Activated T-helper 2 cell treated with anti-CD3 and anti-CD28 coated beads, Interferon-gamma antibody, Interleukin-2, Interleukin-4, amounts not matched to agents 10 μg/mL and 5 μg/mL and 100 μg/mL, durations not matched to agents 14 hours and 24 hours and 36 hours (primary cell): ENCODE measurements at regions of chrX and their contacts with region 1.

Region 1: DNA sequence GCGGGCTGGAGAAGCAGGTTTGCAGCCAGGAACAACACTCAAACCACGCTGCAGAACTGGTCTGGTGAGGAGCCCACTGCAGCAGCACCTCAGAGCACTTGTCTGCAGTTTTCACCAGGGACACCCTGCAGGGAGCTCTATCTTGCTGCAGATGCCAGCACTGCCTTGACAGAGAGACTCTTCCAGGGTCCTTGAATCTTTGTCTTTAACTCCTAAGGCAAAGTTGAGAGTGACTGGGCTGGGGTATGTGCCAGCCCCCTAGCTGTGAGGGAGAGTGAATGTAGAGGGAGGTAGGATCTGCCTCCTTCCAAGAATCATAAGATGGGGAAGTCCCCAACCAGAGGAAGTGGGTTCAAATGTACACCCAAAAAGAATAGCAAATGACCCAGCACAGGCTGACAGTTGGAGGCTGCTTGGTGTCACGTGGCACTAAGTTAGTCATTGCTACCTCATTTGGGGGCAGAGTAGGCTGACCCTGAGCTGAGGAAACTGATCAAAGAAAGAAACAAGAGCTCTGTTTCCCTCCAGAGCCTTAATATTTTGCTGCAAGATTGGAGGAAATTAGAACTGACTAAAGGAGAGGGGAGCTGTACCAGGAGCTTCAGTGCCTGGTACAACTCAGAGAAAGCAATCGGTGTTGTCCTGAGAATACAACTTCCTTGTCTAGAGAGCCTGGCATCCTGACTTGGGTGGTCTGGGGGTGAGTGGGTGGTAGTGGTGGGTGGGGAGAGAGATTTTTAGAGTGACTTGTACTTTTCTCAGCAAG is 28.2 kb upstream of the HUWE1 start:
- DNase-seq: peak; percentile 69
- H3K4me3 Mint-ChIP-seq: peak overlapping the region; percentile 86
- H3K27ac Mint-ChIP-seq: peak overlapping the region; percentile 99
- H3K4me1 Mint-ChIP-seq: peaks cover 46% of the 10 kb centered on the region
- H3K27me3 Mint-ChIP-seq: no peaks in the 10 kb centered on the region

Region 2: DNA sequence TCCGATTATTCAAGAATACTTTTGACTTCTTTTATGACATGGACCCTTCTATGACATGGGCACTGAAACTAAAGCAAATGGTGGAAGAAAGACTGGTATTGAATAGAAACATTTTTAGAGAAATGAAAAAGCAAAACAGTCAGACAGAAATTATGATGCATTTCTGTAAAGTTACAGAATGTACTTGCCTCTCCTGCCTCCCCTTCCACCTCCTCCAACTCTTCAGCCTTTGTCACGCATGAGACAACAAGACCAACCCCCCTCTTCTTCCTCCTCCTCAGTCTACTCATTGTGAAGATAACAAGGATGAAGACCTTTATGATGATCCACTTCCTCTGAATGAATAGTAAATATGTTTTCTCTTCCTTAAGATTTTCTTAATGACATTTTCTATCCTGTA is 18.0 kb after region 1 on chrX:
- intact Hi-C with region 1: loop called (anchors 1 kb)
- DNase-seq: no peak
- H3K4me3 Mint-ChIP-seq: peak overlapping the region; percentile 73
- H3K27ac Mint-ChIP-seq: peak overlapping the region; percentile 90
- H3K4me1 Mint-ChIP-seq: peaks cover 40% of the 10 kb centered on the region
- H3K27me3 Mint-ChIP-seq: no peaks in the 10 kb centered on the region

Region 3: DNA sequence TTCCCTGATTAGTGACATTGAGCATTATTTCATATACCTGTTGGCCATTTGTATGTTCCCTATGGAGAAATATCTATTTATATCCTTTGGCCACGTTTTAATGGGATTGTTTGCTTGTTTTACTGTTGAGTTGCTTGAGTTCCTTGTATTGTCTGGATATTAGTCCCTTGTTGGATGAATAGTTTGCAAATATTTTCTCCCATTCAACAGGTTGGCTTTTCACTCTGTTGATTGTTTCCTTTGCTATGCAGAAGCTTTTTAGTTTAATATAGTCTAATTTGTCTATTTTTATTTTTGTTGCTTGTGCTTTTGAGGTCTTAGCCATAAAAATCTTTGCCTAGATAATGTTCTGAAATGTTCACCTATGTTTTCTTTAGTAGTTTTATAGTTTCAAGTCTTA is 32.0 kb after region 1 on chrX:
- intact Hi-C with region 1: loop called (anchors 5 kb)
- DNase-seq: no peak
- H3K4me3 Mint-ChIP-seq: no peak overlapping the region
- H3K27ac Mint-ChIP-seq: no peak overlapping the region
- H3K4me1 Mint-ChIP-seq: peaks cover 6% of the 10 kb centered on the region
- H3K27me3 Mint-ChIP-seq: no peaks in the 10 kb centered on the region

Region 4: DNA sequence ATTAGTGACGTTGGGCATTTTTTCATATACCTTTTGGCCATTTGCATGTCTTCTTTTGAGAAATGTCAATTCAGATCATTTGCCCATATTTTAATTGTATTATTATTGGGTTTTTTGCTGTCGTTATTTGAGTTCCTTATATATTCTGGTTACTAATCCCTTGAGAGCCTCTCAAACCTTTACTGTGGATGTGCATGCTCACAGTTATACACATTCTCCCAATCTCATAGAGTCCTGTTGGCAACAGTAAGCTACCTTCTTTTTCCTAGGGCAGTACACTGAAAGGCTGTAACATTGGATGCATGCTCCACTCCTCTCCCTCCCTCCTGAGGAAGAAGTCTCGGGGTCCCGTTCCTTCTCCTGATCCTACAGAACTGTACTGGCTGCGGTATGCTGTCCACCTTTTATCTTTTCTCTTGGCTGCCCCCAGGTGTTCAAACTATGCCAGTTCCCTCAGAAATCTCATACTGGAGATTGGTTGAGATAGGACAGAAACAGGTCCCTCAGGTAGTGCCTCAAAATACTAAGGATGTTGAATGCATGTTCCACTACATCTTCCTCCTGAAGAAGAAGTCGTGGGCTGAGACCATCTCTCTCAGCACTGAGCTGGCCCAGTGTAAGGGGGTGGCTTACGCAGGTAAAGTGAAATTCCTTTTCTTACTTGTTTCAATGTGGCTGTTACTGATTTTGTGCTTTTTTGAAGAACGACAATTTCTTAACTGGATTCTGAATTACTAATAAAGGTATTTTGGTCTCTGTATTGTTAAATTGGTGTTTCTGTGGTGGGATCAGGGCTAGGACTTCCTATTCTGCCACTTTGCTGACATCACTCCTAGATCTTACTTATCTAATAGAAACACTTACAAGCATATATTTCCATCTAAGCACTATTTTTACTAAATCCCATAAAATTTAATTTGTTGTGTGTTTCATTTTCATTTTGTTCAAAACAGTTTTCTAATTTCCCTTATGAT is 117.2 kb after region 1 on chrX:
- intact Hi-C with region 1: loop called (anchors 10 kb)
- DNase-seq: peak; percentile 17
- H3K4me3 Mint-ChIP-seq: no peak overlapping the region
- H3K27ac Mint-ChIP-seq: peak overlapping the region; percentile 36
- H3K4me1 Mint-ChIP-seq: peaks cover 10% of the 10 kb centered on the region
- H3K27me3 Mint-ChIP-seq: no peaks in the 10 kb centered on the region